ENCODE measurements at regions of chr19 and their contacts with region 1.

Region 1: GRCh38 chr19:52296773-52297600 is at the start of gene ZNF480:
- DNase-seq: peak; percentile 88
- H3K4me3 ChIP-seq: peak within 1 kb of the TSS; percentile 93
- H3K27ac ChIP-seq: peak within 1 kb of the TSS; percentile 63
- H3K4me1 ChIP-seq: peaks cover 12% of the 10 kb centered on the region
- CTCF ChIP-seq: no peak
- total RNA-seq, gene ZNF480: 9.3 and 12.0 TPM in 2 replicates

Region 2: GRCh38 chr19:52028027-52028779 is 268.8 kb before region 1 on chr19 and contains the start of gene ZNF614:
- CTCF ChIA-PET with region 1: no interaction called
- POLR2A ChIA-PET with region 1: no interaction called
- intact Hi-C with region 1: loop called (anchors 2 kb)
- DNase-seq: peak; percentile 86
- H3K4me3 ChIP-seq: peak within 1 kb of the TSS; percentile 76
- H3K27ac ChIP-seq: peak within 1 kb of the TSS; percentile 62
- H3K4me1 ChIP-seq: peaks cover 10% of the 10 kb centered on the region
- CTCF ChIP-seq: no peak
- total RNA-seq, gene ZNF614: 10.0 and 11.2 TPM in 2 replicates